GM10248 (cell line): ENCODE measurements at regions of chr7 and their contacts with region 1.

Region 1: DNA sequence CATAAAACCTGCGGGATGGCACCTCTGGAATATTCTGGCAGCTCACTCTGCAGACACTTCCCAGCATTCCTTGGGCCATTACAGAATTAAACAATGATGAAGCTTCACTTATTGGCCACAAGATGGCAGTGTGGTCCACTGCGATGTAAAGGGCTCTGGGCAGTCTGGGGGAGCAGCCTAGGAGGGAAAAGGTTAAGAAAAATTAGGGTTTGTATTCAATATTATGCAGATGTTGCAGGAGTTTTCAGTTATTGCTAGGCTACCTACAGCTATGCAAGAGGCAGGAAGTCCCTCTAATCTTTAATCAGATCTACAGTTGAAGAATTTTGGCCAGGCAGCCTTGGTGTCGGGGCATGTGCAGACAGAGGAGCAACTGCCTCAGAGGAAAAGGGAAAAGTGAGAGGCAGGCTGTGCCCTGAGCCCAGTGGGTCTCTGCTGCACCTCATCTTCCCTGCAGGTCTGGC is 233.2 kb upstream of the PRSS1 start:
- DNase-seq: peak; percentile 57
- CTCF ChIP-seq: peak; percentile 79

Region 2: DNA sequence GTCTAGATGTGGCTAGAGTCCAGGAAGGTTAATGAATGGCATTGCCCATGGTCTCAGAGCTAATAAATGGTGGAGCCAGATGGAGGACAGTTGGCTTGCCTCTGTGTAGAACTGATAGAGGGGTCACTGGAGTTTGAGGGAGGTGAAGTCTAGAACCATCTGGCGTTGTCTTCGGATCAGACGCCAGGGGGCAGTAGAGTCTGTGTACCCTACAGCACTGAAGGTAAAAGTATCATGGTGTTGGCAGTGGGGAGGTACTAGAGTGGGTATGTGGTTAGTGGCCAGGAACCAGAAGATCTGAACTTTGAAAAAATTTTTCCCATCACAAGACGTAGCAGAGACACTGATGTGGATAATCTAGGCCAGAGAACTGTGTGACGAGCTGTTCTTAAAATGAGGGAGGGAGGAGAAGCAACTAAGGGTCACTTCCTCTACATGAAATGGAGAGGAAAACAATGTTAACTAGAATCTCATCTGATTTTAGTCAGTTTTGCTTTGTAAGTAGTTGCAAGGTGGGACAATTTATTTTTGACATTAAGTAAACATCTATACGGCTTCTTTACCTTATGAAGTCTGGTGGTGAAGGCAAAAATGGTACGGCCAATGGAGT is 30.3 kb before region 1 on chr7:
- CTCF ChIA-PET with region 1: interaction called, 11 read pairs
- POLR2A ChIA-PET with region 1: no interaction called
- DNase-seq: no peak
- CTCF ChIP-seq: no peak

Region 3: DNA sequence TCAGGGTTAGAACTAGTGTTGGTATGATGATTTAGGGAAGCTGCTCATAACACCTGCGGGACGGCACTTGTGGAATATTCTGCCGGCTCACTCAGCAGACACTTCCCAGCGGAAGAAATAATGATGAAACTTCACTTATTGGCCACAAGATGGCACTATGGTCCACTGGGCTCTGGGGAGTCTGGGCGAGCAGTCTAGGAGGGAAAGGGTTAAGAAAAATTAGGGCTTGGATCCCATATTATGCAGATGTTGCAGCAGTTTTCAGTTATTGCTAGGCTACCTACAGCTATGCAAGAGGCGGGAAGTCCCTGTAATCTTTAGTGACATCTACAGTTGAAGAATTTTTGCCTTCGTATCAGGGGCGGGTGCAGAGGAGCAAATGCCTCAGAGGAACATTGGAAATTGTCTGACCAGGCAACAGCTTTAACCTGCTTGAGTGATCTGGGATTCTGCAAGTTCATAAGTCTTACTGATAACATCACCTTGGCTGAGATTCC is 19.5 kb before region 1 on chr7:
- CTCF ChIA-PET with region 1: interaction called, 31 read pairs
- POLR2A ChIA-PET with region 1: no interaction called
- DNase-seq: peak; percentile 34
- CTCF ChIP-seq: peak; percentile 73